ENCODE measurements at regions of chr6 and their contacts with region 1.

Region 1: DNA sequence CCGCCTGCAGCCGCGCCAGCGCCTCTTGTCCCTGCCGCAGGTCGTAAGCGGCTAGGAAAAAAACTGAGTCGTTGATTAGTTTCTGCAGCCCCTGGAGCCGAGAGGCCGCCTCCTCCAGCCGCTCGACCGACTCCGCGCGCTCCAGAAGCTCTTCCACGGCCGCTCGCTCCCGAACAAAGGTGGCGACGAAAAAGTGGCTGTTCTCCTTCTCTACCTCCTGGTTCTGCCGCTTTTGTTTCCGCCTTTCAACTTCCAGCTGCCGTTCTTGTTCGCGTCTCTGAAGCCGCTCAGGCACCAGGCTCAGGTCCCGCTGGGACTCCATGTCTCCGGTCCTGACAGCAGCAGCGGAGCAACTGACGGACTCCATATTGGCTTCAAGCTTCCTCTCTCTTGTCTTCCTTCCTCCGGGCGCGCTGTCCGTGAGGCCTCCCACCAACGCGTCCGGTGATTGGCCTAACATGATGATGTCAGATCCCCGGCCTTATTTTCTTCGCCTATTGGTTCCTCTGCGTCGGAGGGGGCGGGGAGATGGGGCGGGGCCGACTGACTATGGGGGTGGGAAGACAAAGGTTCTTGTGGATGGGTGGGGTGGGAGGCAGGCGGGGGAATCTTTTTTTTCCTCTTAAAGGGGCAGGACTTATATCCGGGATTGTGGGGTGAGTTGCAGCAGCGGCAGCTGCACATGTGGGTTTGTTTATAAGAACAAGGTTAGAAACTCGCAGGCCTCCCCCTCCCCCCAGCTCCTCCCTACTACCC is at the start of gene TBCC:
- DNase-seq: peak; percentile 97
- H3K4me3 Mint-ChIP-seq: peak within 1 kb of the TSS; percentile 99
- H3K27ac Mint-ChIP-seq: peak within 1 kb of the TSS; percentile 96
- H3K4me1 Mint-ChIP-seq: peaks cover 24% of the 10 kb centered on the region
- H3K27me3 Mint-ChIP-seq: no peaks in the 10 kb centered on the region
- total RNA-seq, gene TBCC: 17.3 TPM

Region 2: DNA sequence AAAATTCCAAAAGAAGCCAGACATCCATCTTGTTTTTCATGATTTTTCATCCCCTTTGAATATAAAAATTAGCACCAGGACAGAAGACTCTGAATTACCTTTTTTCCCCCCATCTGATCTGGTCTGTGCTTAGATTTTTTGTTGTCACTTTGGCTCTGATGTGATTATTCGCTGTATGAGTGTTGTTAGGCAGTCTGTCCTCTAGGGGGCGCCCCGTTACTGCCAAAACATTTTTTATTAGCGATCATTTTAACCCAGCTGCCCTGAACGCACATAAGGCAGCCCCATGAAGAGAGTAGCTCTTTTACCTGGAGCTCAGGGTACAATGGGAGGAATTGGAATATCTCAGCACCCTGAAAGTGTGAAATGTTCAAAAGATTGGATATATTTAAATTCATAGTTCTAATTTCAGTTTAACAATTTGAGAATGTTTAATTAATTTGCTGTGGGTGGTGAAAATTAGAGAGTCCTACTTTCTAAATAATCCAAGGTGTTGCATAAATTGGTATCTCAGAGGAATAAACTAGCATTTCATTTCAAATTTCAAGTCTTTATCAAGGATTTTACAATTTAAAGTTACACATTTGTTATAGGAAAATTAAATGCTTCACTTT is 84.2 kb before region 1 on chr6:
- CTCF ChIA-PET with region 1: interaction called, 4 read pairs
- POLR2A ChIA-PET with region 1: no interaction called
- intact Hi-C with region 1: loop called (anchors 5 kb)
- DNase-seq: peak; percentile 88
- H3K4me3 Mint-ChIP-seq: no peak overlapping the region
- H3K27ac Mint-ChIP-seq: no peak overlapping the region
- H3K4me1 Mint-ChIP-seq: no peaks in the 10 kb centered on the region
- H3K27me3 Mint-ChIP-seq: no peaks in the 10 kb centered on the region

Region 3: GRCh38 chr6:42771741-42772100 is 25.8 kb after region 1 on chr6:
- CTCF ChIA-PET with region 1: interaction called, 7 read pairs
- POLR2A ChIA-PET with region 1: interaction called, 54 read pairs
- intact Hi-C with region 1: loop called (anchors 1 kb)
- DNase-seq: no peak
- H3K4me3 Mint-ChIP-seq: peak overlapping the region; percentile 74
- H3K27ac Mint-ChIP-seq: peak overlapping the region; percentile 98
- H3K4me1 Mint-ChIP-seq: peaks cover 56% of the 10 kb centered on the region
- H3K27me3 Mint-ChIP-seq: no peaks in the 10 kb centered on the region

Region 4: DNA sequence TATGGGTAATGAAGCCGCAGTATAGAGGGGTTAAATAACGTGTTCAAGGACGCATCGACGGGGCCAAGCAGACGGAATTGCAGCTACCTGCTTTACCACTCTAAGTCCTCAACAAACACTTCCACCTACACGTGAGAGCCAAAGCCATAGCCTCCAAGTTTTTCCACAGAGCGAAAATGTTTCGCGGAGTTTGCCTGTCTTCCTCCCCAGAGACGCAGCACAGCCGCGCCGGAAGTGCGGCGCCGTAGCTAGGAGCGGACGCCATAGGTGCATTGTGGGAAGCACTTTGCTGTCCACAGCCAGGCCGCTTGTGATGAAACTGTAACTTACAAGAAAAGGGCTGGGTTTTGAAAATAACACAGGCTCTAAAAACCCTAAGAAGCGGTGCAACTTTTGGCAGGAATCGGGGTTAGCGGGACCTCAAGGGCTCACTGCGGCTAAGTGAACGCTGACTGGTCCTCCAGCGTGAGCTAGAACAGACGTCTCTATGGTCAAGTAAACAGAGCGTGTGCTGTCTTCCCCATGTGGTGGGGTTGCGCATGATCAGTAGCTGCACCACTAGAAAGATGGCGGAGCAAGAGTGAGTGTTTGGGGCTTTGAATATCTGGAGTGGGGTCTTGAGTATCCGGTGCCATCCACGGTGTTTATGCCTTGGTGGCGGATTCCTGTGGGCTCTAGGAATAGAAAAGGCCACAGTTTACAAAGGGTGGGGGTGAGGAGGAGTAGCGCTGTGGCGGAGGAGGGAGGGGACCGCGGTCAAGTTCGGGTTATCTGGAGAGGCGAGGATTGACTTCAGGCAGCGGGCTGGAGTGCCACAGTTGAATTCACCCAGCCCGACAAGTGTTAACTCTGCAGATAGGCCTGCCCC is 133.7 kb after region 1 on chr6 and contains the start of gene RPL7L1:
- CTCF ChIA-PET with region 1: interaction called, 25 read pairs
- POLR2A ChIA-PET with region 1: interaction called, 26 read pairs
- intact Hi-C with region 1: loop called (anchors 1 kb)
- DNase-seq: peak; percentile 89
- H3K4me3 Mint-ChIP-seq: peak within 1 kb of the TSS; percentile 97
- H3K27ac Mint-ChIP-seq: peak within 1 kb of the TSS; percentile 96
- H3K4me1 Mint-ChIP-seq: peaks cover 17% of the 10 kb centered on the region
- H3K27me3 Mint-ChIP-seq: no peaks in the 10 kb centered on the region
- total RNA-seq, gene RPL7L1: 111 to 117 TPM

Region 5: DNA sequence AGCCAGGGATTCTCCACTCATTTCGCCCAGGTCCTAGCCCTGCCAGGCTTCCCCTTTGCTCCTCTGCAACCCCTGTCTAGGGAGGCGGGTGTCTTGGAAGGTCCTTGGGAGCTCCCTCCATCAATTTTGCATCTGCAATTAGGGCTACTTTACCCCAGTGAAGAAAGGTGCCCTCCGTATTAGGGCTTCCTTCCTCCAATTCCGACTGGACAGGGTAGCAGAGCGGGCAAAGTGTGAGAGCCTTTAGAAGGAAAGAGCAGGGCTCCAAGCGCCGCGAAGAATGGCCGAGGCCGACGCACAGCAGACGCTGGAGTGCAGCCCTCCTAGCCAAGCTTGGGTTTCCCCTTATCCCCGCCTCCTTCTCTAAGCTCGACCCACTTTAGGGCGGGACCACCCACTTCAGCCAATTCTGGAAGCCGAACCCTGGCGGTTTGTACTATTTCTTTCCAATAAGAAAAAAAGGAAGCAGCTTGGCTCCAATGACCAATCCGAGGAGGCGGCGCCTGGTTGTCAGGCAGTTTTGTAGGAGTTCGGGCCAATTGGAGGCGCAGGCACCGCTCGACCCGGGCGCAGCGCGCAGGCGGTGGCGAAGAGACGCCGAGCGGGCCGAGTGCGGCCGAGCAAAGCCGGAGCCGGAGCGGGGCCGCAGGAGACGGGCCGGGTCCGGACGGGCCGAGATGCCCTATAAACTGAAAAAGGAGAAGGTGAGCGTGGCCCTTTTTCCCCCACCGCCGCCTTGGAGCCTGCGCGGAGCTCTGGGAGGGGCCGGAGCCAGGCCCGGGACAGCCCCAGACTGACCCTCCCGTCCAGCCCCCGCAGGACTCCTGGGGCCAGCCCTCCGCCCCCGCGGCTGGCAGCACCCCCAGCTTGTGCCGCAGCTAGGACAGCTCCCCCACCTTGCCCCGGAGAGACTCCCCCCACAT is 238.4 kb after region 1 on chr6 and contains the start of gene PPP2R5D:
- CTCF ChIA-PET with region 1: no interaction called
- POLR2A ChIA-PET with region 1: interaction called, 3 read pairs
- intact Hi-C with region 1: loop called (anchors 2 kb)
- DNase-seq: peak; percentile 99
- H3K4me3 Mint-ChIP-seq: peak within 1 kb of the TSS; percentile 85
- H3K27ac Mint-ChIP-seq: peak within 1 kb of the TSS; percentile 85
- H3K4me1 Mint-ChIP-seq: peaks cover 56% of the 10 kb centered on the region
- H3K27me3 Mint-ChIP-seq: no peaks in the 10 kb centered on the region
- total RNA-seq, gene PPP2R5D: 59.1 to 60.2 TPM